ENCODE measurements at regions of chr1 and their contacts with region 1.

Region 1: GRCh38 chr1:165597883-165598675 is 33.0 kb upstream of the MGST3 start:
- DNase-seq: peak; percentile 95
- CTCF ChIP-seq: no peak

Region 2: GRCh38 chr1:165235155-165235776 is 362.8 kb before region 1 on chr1:
- in situ Hi-C with region 1: no loop called
- DNase-seq: no peak
- CTCF ChIP-seq: no peak

Region 3: DNA sequence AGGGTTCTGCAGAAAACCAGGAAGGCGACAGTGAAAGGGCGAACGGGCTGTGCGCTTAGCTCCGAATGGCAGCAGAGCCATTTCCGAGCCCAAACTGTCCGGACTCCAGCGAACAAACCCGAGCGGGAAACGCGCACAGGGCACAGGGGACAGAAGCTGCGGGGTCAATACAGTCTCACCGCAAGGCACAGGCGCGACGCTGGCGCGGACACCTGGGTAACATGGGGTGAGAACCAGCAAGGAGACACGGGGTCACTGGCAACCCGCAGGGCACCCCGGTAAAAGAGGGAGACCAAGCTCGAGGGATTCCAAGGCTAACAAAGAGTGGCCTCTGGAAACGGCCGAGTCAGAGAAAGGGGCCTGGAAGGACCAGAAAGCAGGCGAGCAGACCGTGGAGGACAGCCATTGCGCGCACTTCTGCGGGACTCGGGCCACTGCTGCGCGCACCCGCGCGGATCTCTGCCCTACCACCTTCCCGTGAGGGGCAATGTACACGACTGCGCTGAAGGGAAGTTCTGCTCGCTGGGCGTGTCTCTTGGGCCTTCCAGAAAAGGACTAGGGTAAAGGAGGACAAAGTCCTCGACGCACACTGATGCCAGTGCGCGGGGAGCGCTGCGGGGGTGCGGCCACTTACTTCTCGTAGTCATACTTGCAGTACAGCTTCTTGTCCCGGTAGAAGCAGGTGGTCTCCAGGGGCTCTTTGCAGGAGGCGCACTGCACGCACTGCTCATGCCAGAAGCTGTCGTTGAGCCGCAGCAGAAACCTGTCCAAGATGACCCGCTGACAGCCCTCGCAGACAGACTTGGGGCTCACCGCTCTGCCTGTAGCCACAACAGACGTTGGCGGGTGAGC is 245.4 kb before region 1 on chr1:
- in situ Hi-C with region 1: no loop called
- DNase-seq: no peak
- CTCF ChIP-seq: no peak

Region 4: DNA sequence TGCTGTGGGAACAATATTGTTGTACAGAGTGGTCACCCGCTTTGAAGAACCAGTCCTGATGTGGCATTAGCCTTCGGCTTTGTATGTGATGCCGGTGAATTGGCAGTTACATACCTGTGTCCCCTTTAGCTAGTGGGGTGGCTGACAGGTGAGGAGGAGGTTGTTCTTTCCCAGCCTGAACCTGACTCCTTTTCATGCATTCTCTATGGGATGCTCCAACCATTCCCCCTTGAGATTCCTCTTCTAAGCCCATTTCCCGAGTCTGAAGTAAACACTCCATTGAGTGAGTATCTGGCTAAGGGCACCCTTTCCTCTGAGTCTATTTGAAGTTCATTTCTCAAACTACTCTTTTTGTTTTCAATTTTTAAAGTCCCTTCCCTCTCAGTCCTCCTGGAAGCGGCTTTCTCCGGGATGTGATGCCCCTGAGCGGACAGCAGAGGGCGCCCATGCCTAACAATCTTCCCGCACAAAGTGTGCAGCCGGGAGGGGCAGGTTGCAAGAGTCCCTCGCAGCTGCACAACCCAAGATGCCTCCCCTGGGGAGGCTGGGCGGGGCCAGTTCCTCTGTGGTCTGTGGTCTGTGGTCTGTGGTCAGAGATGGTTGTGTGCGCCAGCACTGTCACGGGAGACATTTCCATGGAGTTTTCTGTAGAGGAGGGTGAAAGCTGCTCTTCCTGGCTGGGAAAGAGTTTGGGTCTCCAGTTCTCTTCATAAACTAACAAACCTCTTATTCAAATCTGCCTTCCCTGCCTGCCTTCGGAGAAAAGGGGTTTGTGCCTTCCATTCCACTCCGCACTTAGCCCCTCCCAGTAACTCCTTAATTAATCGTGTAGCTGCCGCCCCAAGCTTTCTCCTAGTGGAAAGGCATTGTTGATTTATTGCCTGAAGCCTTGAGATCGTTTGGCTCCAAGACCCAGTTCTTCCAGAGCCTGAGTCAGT is 205.2 kb before region 1 on chr1:
- in situ Hi-C with region 1: loop called (anchors 5 kb)
- DNase-seq: peak; percentile 85
- CTCF ChIP-seq: peak; percentile 94

Region 5: DNA sequence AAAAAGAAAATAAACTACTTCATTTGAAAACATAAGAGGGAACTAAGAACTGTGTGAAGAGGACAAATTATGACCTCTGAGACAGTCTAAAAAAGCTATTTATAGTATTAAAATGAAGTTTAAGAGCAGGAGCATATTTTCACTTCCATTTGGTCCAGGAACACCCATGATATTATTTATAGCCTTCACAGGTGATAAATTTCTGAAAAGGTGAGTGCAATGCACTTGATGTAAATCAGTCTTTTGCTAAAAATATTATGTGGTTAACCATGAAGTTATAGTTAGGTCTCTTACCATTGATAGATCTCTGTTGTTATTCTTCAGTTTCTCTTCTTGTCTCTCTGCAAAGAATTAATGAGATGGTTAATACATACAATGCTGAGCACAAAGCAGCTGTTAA is 155.9 kb after region 1 on chr1:
- in situ Hi-C with region 1: no loop called
- DNase-seq: peak; percentile 36
- CTCF ChIP-seq: no peak

Region 6: DNA sequence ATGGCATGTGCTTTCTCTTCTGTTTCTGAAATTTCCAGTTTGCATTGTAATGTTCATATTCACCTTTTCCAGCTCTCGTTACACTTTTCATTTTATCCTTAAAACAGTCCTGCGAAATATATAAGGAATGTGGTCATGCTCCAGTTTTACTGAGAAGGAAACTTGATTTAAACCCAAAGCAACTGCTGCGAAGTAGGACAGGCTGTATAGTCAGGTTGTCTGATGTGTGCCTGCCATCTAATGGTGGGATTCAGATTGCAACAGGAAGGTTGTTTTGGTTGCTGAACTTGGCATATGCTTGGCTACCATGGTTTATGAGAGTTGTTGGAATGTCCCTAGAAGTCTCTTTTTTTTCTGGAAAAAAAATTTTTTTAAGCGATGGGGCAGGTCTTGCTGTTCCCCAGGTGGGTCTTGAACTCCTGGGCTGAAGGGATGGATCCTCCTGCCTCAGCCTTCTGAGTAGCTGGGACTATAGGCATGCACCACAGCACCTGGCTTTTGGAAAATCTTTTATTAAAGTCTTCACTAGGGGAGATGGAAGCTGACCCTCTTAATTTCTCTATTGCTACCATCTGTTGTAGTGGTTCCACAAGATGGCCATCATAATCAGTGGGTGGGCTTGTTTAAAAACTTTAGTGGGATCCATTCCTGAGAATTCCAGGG is 316.2 kb after region 1 on chr1:
- in situ Hi-C with region 1: loop called (anchors 5 kb)
- DNase-seq: peak; percentile 77
- CTCF ChIP-seq: peak; percentile 86

Region 7: DNA sequence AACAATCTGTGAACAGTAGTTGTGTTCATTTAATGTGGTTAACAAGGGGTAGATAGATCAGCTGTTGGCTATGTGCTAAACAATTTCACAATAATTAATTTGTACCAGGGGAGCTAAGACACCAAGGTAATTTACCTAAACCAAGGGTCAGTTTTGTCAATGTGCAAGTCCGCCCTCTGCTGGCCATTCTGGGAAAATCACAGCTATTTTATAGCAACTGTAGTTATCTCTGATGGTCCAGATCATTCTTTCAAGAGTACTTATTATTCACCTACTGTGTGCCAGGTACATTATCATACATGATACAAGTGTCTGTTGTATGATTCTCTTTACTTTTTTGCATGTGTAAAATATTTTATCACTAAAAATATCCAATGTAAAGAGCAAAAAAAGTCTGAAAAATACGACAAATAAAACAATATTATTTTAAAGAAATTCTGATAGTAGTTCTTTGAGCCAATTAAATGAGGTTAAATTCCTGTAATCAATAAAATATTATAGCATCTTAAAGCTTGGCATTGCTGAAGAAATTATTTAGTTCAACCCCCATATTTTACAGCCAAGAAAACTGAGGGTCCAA is 881.1 kb after region 1 on chr1:
- in situ Hi-C with region 1: loop called (anchors 25 kb)
- DNase-seq: peak; percentile 38
- CTCF ChIP-seq: peak; percentile 75

Measured in GM13976 (cell line).